BJ (cell line): ENCODE measurements at regions of chr7 and their contacts with region 1.

Region 1: DNA sequence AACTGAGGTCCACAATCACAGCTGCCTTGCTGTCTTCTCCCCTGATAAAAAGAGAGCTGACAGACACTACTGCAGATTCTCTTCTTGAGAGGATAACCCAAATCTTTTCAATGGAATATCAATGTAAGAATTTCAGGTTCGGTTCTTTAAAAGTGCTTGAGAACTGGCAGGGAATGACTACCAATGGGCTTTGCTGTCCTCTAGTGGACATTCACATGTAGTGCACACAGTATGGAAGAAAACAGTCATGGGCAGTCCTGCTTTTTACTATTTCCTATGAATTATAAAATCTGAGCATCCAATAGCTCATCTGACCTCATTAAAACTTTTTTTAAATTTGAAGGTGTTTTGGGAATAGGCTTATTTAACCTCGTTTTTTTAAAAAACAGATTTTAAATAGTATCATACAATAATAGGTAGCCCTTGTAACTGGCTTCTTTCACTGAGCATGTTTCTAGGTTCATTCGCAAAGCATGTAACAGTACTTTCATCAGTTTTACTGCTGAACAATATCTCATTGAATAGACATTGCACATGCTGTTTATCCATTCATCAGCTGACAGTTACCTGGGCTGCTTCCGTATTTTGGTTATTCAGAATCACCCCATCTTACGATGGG is 18.3 kb downstream of the FZD9 start:
- DNase-seq: no peak
- H3K4me3 ChIP-seq: no peak overlapping the region
- H3K27me3 ChIP-seq: no peaks in the 10 kb centered on the region
- CTCF ChIP-seq: peak; percentile 97

Region 2: GRCh38 chr7:73329861-73330581 is 121.9 kb before region 1 on chr7:
- CTCF ChIA-PET with region 1: interaction called, 21 read pairs
- POLR2A ChIA-PET with region 1: no interaction called
- DNase-seq: no peak
- H3K4me3 ChIP-seq: no peak overlapping the region
- H3K27me3 ChIP-seq: no peaks in the 10 kb centered on the region
- CTCF ChIP-seq: no peak

Region 3: DNA sequence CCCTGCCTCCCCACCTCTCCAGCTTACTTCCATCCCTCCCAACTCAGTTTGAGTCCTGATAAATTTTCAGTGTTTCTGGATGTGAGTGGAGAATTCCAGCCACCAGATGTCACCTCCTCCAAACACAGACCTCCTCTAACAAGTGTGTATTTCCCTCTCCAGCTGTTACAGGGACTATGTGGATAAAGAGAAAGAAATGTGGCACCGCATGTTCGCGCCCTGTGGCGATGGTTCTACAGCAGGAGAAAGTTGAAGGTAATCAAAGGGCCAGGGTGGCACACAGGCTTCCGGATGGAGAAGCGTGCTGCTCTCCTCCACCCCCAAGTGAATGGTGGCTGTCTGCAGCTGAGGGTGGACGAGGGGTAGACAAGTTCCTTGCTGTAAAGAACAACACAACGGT is 109.2 kb before region 1 on chr7:
- CTCF ChIA-PET with region 1: interaction called, 58 read pairs
- POLR2A ChIA-PET with region 1: no interaction called
- DNase-seq: no peak
- H3K4me3 ChIP-seq: no peak overlapping the region
- H3K27me3 ChIP-seq: peaks cover 4% of the 10 kb centered on the region
- CTCF ChIP-seq: peak; percentile 79

Region 4: GRCh38 chr7:73468097-73468496 is 16.2 kb after region 1 on chr7:
- CTCF ChIA-PET with region 1: interaction called, 13 read pairs
- POLR2A ChIA-PET with region 1: no interaction called
- DNase-seq: no peak
- H3K4me3 ChIP-seq: no peak overlapping the region
- H3K27me3 ChIP-seq: no peaks in the 10 kb centered on the region
- CTCF ChIP-seq: no peak

Region 5: GRCh38 chr7:73477376-73477775 is 25.5 kb after region 1 on chr7:
- CTCF ChIA-PET with region 1: interaction called, 13 read pairs
- POLR2A ChIA-PET with region 1: no interaction called
- DNase-seq: no peak
- H3K4me3 ChIP-seq: no peak overlapping the region
- H3K27me3 ChIP-seq: no peaks in the 10 kb centered on the region
- CTCF ChIP-seq: no peak